ENCODE measurements at regions of chr1 and their contacts with region 1.

Region 1: DNA sequence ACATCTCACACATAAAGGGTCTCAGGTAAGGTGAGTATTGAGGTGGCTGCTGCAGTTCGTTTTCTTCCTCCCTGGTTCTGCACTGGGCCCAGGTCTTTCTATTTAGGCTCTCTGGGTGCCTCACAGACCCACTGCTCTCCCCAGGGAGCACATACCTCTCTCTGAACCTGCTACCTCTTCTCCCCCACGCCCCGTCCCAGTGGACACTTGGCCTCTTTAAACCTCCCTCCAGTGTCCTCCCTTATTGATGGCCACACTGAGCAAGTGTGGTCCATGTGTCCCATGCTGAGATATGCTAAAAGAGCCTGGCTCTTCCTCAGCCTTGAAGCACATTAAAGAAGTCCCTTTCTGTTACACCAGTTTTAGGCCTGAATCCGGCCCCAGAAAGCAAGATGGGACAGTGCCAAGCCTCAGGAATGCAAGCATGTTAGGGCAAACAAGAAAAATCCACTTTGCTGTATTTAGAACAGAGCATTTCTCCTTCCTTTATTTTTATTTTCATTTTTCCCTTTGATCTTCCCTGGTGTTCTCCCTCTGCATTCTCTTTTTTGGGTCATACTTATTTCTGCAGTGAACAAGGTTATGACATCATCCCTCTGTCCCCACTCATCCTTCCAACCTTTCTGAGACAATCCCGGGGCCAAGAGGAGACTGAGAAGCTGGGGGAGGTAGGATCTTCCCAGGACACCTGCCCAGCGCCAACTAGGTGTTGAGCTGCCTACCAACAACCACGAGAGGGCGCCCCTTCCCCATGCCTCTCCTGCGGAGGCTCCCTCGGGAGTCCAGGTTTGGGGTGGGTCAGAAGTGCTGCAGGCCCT is 5.0 kb upstream of the CHI3L2 start:
- DNase-seq: peak; percentile 82
- H3K4me3 Mint-ChIP-seq: peak overlapping the region; percentile 19
- H3K27ac Mint-ChIP-seq: peak overlapping the region; percentile 78
- H3K4me1 Mint-ChIP-seq: peaks cover 87% of the 10 kb centered on the region
- H3K27me3 Mint-ChIP-seq: no peaks in the 10 kb centered on the region

Region 2: GRCh38 chr1:111139956-111140679 is 82.4 kb before region 1 on chr1 and contains the starts of genes CEPT1 and DRAM2:
- CTCF ChIA-PET with region 1: interaction called, 11 read pairs
- POLR2A ChIA-PET with region 1: interaction called, 23 read pairs
- DNase-seq: peak; percentile 94
- H3K4me3 Mint-ChIP-seq: peak within 1 kb of the TSS; percentile 99
- H3K27ac Mint-ChIP-seq: peak within 1 kb of the TSS; percentile 86
- H3K4me1 Mint-ChIP-seq: peaks cover 50% of the 10 kb centered on the region
- H3K27me3 Mint-ChIP-seq: no peaks in the 10 kb centered on the region
- total RNA-seq, gene CEPT1: 31.0 to 32.5 TPM
- total RNA-seq, gene DRAM2: 33.0 to 38.0 TPM

Region 3: GRCh38 chr1:111203681-111204200 is 18.8 kb before region 1 on chr1:
- CTCF ChIA-PET with region 1: interaction called, 275 read pairs
- POLR2A ChIA-PET with region 1: interaction called, 590 read pairs
- DNase-seq: peak; percentile 91
- H3K4me3 Mint-ChIP-seq: peak overlapping the region; percentile 96
- H3K27ac Mint-ChIP-seq: peak overlapping the region; percentile 84
- H3K4me1 Mint-ChIP-seq: peaks cover 59% of the 10 kb centered on the region
- H3K27me3 Mint-ChIP-seq: peaks cover 14% of the 10 kb centered on the region

Region 4: GRCh38 chr1:111309690-111310089 is 87.2 kb after region 1 on chr1:
- CTCF ChIA-PET with region 1: no interaction called
- POLR2A ChIA-PET with region 1: no interaction called
- DNase-seq: no peak
- H3K4me3 Mint-ChIP-seq: no peak overlapping the region
- H3K27ac Mint-ChIP-seq: no peak overlapping the region
- H3K4me1 Mint-ChIP-seq: no peaks in the 10 kb centered on the region
- H3K27me3 Mint-ChIP-seq: peaks cover 25% of the 10 kb centered on the region

Region 5: DNA sequence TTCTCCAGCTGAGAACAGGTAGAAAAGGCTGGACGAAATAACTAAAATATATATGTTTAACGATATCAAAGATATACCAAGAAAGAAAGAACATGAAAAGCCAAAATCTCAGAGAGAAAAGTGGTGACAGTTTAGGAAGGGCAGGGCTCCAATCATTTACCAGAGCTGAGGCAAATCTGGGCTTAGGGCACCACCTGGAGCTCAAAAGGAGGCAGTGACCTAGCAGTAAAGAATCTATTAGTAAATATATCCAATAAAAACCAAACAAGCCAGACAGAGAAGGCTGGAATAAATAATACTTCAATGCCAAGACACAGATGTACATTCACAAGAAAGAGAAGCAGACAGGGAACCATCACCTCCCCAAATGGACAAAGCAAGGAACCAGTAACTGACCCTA is 111.7 kb after region 1 on chr1:
- CTCF ChIA-PET with region 1: interaction called, 24 read pairs
- POLR2A ChIA-PET with region 1: interaction called, 4 read pairs
- DNase-seq: peak; percentile 58
- H3K4me3 Mint-ChIP-seq: no peak overlapping the region
- H3K27ac Mint-ChIP-seq: no peak overlapping the region
- H3K4me1 Mint-ChIP-seq: peaks cover 12% of the 10 kb centered on the region
- H3K27me3 Mint-ChIP-seq: peaks cover 2% of the 10 kb centered on the region

Region 6: DNA sequence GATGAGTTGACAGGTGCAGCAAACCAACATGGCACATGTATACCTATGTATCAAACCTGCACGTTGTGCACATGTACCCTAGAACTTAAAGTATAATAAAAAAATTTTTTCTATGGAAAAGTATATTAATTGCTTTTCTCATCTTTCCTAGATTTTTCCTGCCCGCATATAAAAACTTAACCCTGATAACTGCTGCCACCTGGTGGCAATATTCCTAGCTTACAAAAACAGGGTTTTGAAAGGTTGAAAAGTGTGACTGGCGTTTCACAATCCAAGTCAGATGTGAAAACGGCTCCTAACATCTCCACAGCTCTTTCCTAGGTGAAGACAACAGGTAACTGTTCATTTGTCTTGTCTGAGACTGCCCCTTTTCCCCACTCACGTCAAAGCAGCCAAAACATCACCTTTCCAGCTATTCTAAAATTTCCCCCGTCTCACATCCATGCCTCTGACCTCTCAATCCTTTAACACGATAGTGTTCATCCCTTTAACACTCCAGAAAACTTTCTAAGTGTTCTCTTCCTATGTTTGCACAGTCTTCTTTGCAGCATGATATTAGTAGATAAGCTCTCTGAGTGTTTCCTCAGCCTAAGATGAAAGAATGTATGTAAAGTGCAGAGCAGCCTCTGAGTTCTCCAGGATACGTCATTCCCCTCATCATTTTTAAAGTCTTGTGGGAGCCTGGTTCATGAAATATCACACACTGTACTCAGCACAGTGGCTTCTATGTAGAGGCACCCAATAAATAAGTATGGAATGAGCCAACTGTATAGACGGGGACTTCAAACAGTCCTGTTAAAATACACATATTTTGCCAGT is 177.5 kb after region 1 on chr1:
- CTCF ChIA-PET with region 1: interaction called, 64 read pairs
- POLR2A ChIA-PET with region 1: interaction called, 6 read pairs
- DNase-seq: peak; percentile 45
- H3K4me3 Mint-ChIP-seq: no peak overlapping the region
- H3K27ac Mint-ChIP-seq: no peak overlapping the region
- H3K4me1 Mint-ChIP-seq: peaks cover 8% of the 10 kb centered on the region
- H3K27me3 Mint-ChIP-seq: peaks cover 43% of the 10 kb centered on the region

Region 7: GRCh38 chr1:111448918-111449702 is 226.6 kb after region 1 on chr1 and contains the starts of genes ATP5PB and WDR77:
- CTCF ChIA-PET with region 1: interaction called, 3 read pairs
- POLR2A ChIA-PET with region 1: interaction called, 12 read pairs
- DNase-seq: peak; percentile 94
- H3K4me3 Mint-ChIP-seq: peak within 1 kb of the TSS; percentile 100
- H3K27ac Mint-ChIP-seq: peak within 1 kb of the TSS; percentile 95
- H3K4me1 Mint-ChIP-seq: peaks cover 75% of the 10 kb centered on the region
- H3K27me3 Mint-ChIP-seq: no peaks in the 10 kb centered on the region
- total RNA-seq, gene ATP5PB: 272 to 286 TPM
- total RNA-seq, gene WDR77: 26.3 to 28.4 TPM

Measured in activated CD4-positive, alpha-beta memory T cell treated with anti-CD3 and anti-CD28 coated beads, Interleukin-2, amount 10 ng/mL, durations not matched to agents 7 days and 5 days (primary cell).